B cell (primary cell): ENCODE measurements at regions of chr7 and their contacts with region 1.

Region 1: GRCh38 chr7:38360776-38361175 is 87.3 kb upstream of the TARP start:
- DNase-seq: no peak
- ATAC-seq: no peak
- H3K4me3 ChIP-seq: no peak overlapping the region
- H3K4me3 Mint-ChIP-seq: no peak overlapping the region
- H3K27ac ChIP-seq: no peak overlapping the region
- H3K27ac Mint-ChIP-seq: no peak overlapping the region
- H3K4me1 ChIP-seq: peaks cover 23 to 45% of the 10 kb centered on the region in 2 donors
- H3K4me1 Mint-ChIP-seq: peaks cover 41% of the 10 kb centered on the region
- H3K27me3 ChIP-seq: no peaks in the 10 kb centered on the region
- H3K27me3 Mint-ChIP-seq: no peaks in the 10 kb centered on the region
- CTCF ChIP-seq: no peak

Region 2: GRCh38 chr7:37982423-37982822 is 378.4 kb before region 1 on chr7:
- CTCF ChIA-PET with region 1: no interaction called
- POLR2A ChIA-PET with region 1: no interaction called
- intact Hi-C with region 1: no loop called
- DNase-seq: no peak
- ATAC-seq: no peak
- H3K4me3 ChIP-seq: no peak overlapping the region
- H3K4me3 Mint-ChIP-seq: no peak overlapping the region
- H3K27ac ChIP-seq: no peak overlapping the region
- H3K27ac Mint-ChIP-seq: no peak overlapping the region
- H3K4me1 ChIP-seq: no peaks in the 10 kb centered on the region
- H3K4me1 Mint-ChIP-seq: no peaks in the 10 kb centered on the region
- H3K27me3 ChIP-seq: no peaks in the 10 kb centered on the region
- H3K27me3 Mint-ChIP-seq: peaks cover 3% of the 10 kb centered on the region
- CTCF ChIP-seq: no peak

Region 3: DNA sequence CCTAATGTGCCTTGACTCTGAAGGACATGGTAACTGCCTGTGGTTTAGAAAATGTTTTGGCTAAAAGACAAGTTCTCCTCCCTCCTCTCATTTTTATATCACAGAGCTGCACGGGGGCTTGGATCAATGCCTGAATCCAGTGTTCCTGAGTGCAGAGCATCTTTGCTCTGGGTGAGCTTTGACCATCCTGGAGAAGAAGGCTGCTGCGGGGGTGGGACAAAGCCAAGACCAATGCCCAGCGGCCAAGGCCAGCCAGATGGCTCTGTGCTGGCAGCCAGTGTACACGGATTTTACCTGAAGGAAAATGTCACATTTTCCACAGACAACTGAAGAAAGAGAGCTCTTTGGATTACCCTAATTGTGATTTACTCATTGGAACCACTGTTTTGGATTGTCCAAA is 14.7 kb after region 1 on chr7:
- CTCF ChIA-PET with region 1: interaction called, 61 read pairs
- POLR2A ChIA-PET with region 1: no interaction called
- intact Hi-C with region 1: no loop called
- DNase-seq: no peak
- ATAC-seq: no peak
- H3K4me3 ChIP-seq: no peak overlapping the region
- H3K4me3 Mint-ChIP-seq: no peak overlapping the region
- H3K27ac ChIP-seq: no peak overlapping the region
- H3K27ac Mint-ChIP-seq: no peak overlapping the region
- H3K4me1 ChIP-seq: no peaks in the 10 kb centered on the region
- H3K4me1 Mint-ChIP-seq: no peaks in the 10 kb centered on the region
- H3K27me3 ChIP-seq: no peaks in the 10 kb centered on the region
- H3K27me3 Mint-ChIP-seq: no peaks in the 10 kb centered on the region
- CTCF ChIP-seq: no peak

Region 4: GRCh38 chr7:38385682-38386428 is 25.1 kb after region 1 on chr7:
- CTCF ChIA-PET with region 1: no interaction called
- POLR2A ChIA-PET with region 1: no interaction called
- intact Hi-C with region 1: no loop called
- DNase-seq: no peak
- ATAC-seq: no peak
- H3K4me3 ChIP-seq: no peak overlapping the region
- H3K4me3 Mint-ChIP-seq: no peak overlapping the region
- H3K27ac ChIP-seq: no peak overlapping the region
- H3K27ac Mint-ChIP-seq: no peak overlapping the region
- H3K4me1 ChIP-seq: no peaks in the 10 kb centered on the region
- H3K4me1 Mint-ChIP-seq: no peaks in the 10 kb centered on the region
- H3K27me3 ChIP-seq: no peaks in the 10 kb centered on the region
- H3K27me3 Mint-ChIP-seq: no peaks in the 10 kb centered on the region
- CTCF ChIP-seq: no peak